Mammary epithelial cell (primary cell): ENCODE measurements at regions of chr4 and their contacts with region 1.

Region 1: GRCh38 chr4:171924746-171925376 is 111.7 kb downstream of the GALNTL6 start:
- DNase-seq: no peak
- H3K4me3 ChIP-seq: no peak overlapping the region
- H3K27ac ChIP-seq: no peak overlapping the region
- H3K4me1 ChIP-seq: no peaks in the 10 kb centered on the region
- H3K27me3 ChIP-seq: no peaks in the 10 kb centered on the region
- CTCF ChIP-seq: no peak

Region 2: DNA sequence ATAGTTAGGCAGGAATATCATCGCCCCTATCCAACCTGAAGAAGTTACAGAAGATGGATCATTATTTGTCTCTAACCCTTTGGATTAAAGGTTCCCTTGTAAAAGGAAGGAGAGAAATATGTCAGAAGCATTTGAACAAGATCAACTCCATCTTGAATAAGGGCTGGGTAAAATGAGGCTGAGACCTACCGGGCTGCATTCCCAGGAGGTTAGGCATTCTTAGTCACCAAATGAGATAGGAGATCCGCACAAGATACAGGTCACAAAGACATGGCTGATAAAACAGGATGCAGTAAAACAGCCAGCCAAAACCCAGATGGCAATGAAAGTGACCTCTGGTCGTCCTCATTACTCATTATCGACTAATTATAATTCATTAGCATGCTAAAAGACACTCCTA is 37.2 kb after region 1 on chr4:
- CTCF ChIA-PET with region 1: no interaction called
- dilution Hi-C with region 1: loop called (anchors 5 kb)
- in situ Hi-C with region 1: no loop called
- intact Hi-C with region 1: no loop called
- DNase-seq: no peak
- H3K4me3 ChIP-seq: no peak overlapping the region
- H3K27ac ChIP-seq: no peak overlapping the region
- H3K4me1 ChIP-seq: no peaks in the 10 kb centered on the region
- H3K27me3 ChIP-seq: no peaks in the 10 kb centered on the region
- CTCF ChIP-seq: no peak

Region 3: DNA sequence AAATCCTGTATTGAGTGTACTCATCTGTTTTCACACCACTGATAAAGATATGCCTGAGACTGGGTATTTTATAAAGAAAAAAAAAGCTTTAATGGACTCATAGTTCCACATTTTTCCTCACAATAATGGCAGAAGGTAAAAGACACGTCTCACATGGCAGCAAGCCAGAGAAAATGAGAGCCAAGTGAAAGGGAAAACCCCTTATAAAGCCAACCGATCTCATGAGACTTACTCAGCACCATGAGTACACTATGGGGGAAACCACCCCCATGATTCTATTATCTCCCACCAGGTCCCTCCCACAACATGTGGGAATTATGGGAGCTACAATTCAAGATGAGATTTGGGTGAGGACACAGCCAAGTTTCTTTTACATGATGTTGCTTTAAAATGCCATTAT is 60.3 kb after region 1 on chr4:
- CTCF ChIA-PET with region 1: no interaction called
- dilution Hi-C with region 1: no loop called
- in situ Hi-C with region 1: no loop called
- intact Hi-C with region 1: no loop called
- DNase-seq: peak; percentile 5
- H3K4me3 ChIP-seq: no peak overlapping the region
- H3K27ac ChIP-seq: no peak overlapping the region
- H3K4me1 ChIP-seq: no peaks in the 10 kb centered on the region
- H3K27me3 ChIP-seq: no peaks in the 10 kb centered on the region
- CTCF ChIP-seq: no peak